Colonic mucosa (tissue), 4 donors: ENCODE measurements at regions of chr6 and their contacts with region 1.

Region 1: DNA sequence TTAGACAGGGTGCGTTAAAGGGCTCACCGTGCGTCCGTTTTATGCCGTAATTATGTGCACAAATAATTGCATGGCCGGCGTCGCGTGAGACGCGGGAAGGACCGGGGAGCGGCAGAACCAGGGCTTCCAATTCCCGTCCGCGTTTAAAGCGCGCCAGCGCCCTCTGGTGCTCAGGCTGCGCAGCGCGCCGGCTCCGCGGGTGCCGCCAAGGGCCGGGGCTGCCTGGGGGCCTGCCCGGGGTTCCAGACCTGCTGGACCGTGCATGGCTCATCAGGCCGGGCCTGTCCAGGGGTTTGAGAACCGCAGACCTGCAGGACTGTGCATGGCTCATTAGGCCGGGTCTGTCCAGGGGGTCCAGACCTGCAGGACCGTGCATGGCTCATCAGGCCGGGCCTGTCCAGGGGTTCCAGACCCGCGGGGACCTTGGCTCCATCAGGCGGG is 369.0 kb downstream of the THBS2 start:
- DNase-seq: peak; percentile 75
- H3K4me3 ChIP-seq: no peak overlapping the region
- H3K27ac ChIP-seq: no peak overlapping the region
- H3K4me1 ChIP-seq: no peaks in the 10 kb centered on the region
- H3K27me3 ChIP-seq: no peaks in the 10 kb centered on the region
- CTCF ChIP-seq: peak; percentile 97

Region 2: GRCh38 chr6:168157272-168158007 is 727.2 kb before region 1 on chr6:
- intact Hi-C with region 1: loop called (anchors 10 kb)
- DNase-seq: peak; percentile 29
- H3K4me3 ChIP-seq: no peak overlapping the region
- H3K27ac ChIP-seq: peak overlapping the region; percentile 35
- H3K4me1 ChIP-seq: no peaks in the 10 kb centered on the region
- H3K27me3 ChIP-seq: no peaks in the 10 kb centered on the region
- CTCF ChIP-seq: no peak

Region 3: GRCh38 chr6:168370310-168370991 is 514.2 kb before region 1 on chr6:
- intact Hi-C with region 1: loop called (anchors 1 kb)
- DNase-seq: peak; percentile 86
- H3K4me3 ChIP-seq: no peak overlapping the region
- H3K27ac ChIP-seq: no peak overlapping the region
- H3K4me1 ChIP-seq: no peaks in the 10 kb centered on the region
- H3K27me3 ChIP-seq: no peaks in the 10 kb centered on the region
- CTCF ChIP-seq: peak; percentile 75

Region 4: GRCh38 chr6:168616816-168617765 is 267.6 kb before region 1 on chr6:
- intact Hi-C with region 1: loop called (anchors 10 kb)
- DNase-seq: no peak
- H3K4me3 ChIP-seq: no peak overlapping the region
- H3K27ac ChIP-seq: no peak overlapping the region
- H3K4me1 ChIP-seq: no peaks in the 10 kb centered on the region
- H3K27me3 ChIP-seq: no peaks in the 10 kb centered on the region
- CTCF ChIP-seq: peak; percentile 20

Region 5: GRCh38 chr6:168823397-168824212 is 61.1 kb before region 1 on chr6:
- intact Hi-C with region 1: no loop called
- DNase-seq: no peak
- H3K4me3 ChIP-seq: no peak overlapping the region
- H3K27ac ChIP-seq: no peak overlapping the region
- H3K4me1 ChIP-seq: no peaks in the 10 kb centered on the region
- H3K27me3 ChIP-seq: no peaks in the 10 kb centered on the region
- CTCF ChIP-seq: no peak

Region 6: GRCh38 chr6:169487579-169488436 is 603.1 kb after region 1 on chr6:
- intact Hi-C with region 1: no loop called
- DNase-seq: no peak
- H3K4me3 ChIP-seq: no peak overlapping the region
- H3K27ac ChIP-seq: no peak overlapping the region
- H3K4me1 ChIP-seq: no peaks in the 10 kb centered on the region
- H3K27me3 ChIP-seq: no peaks in the 10 kb centered on the region
- CTCF ChIP-seq: no peak